ENCODE measurements at regions of chr17 and their contacts with region 1.

Region 1: GRCh38 chr17:59892924-59893676 is at the starts of genes RPS6KB1 and TUBD1:
- DNase-seq: peak; percentile 99
- H3K4me3 Mint-ChIP-seq: peak within 1 kb of the TSS; percentile 100
- H3K27ac Mint-ChIP-seq: peak within 1 kb of the TSS; percentile 96
- H3K4me1 Mint-ChIP-seq: peaks cover 58% of the 10 kb centered on the region
- H3K27me3 Mint-ChIP-seq: no peaks in the 10 kb centered on the region
- total RNA-seq, gene RPS6KB1: 42.1 to 48.5 TPM
- total RNA-seq, gene TUBD1: 15.2 to 15.4 TPM

Region 2: GRCh38 chr17:59707114-59707970 is 185.8 kb before region 1 on chr17 and contains the starts of genes PTRH2 and VMP1:
- CTCF ChIA-PET with region 1: no interaction called
- intact Hi-C with region 1: loop called (anchors 1 kb)
- DNase-seq: peak; percentile 97
- H3K4me3 Mint-ChIP-seq: peak within 1 kb of the TSS; percentile 94
- H3K27ac Mint-ChIP-seq: peak within 1 kb of the TSS; percentile 92
- H3K4me1 Mint-ChIP-seq: peaks cover 54% of the 10 kb centered on the region
- H3K27me3 Mint-ChIP-seq: no peaks in the 10 kb centered on the region
- total RNA-seq, gene PTRH2: 19.7 to 24.4 TPM
- total RNA-seq, gene VMP1: 423 to 438 TPM

Region 3: GRCh38 chr17:59846394-59847165 is 46.5 kb before region 1 on chr17:
- CTCF ChIA-PET with region 1: interaction called, 3 read pairs
- intact Hi-C with region 1: loop called (anchors 2 kb)
- DNase-seq: peak; percentile 53
- H3K4me3 Mint-ChIP-seq: peak overlapping the region; percentile 28
- H3K27ac Mint-ChIP-seq: peak overlapping the region; percentile 100
- H3K4me1 Mint-ChIP-seq: peaks cover 76% of the 10 kb centered on the region
- H3K27me3 Mint-ChIP-seq: no peaks in the 10 kb centered on the region

Region 4: GRCh38 chr17:59941131-59941530 is 48.0 kb after region 1 on chr17:
- CTCF ChIA-PET with region 1: no interaction called
- intact Hi-C with region 1: loop called (anchors 1 kb)
- DNase-seq: peak; percentile 38
- H3K4me3 Mint-ChIP-seq: peak overlapping the region; percentile 39
- H3K27ac Mint-ChIP-seq: peak overlapping the region; percentile 98
- H3K4me1 Mint-ChIP-seq: peaks cover 59% of the 10 kb centered on the region
- H3K27me3 Mint-ChIP-seq: no peaks in the 10 kb centered on the region

Region 5: DNA sequence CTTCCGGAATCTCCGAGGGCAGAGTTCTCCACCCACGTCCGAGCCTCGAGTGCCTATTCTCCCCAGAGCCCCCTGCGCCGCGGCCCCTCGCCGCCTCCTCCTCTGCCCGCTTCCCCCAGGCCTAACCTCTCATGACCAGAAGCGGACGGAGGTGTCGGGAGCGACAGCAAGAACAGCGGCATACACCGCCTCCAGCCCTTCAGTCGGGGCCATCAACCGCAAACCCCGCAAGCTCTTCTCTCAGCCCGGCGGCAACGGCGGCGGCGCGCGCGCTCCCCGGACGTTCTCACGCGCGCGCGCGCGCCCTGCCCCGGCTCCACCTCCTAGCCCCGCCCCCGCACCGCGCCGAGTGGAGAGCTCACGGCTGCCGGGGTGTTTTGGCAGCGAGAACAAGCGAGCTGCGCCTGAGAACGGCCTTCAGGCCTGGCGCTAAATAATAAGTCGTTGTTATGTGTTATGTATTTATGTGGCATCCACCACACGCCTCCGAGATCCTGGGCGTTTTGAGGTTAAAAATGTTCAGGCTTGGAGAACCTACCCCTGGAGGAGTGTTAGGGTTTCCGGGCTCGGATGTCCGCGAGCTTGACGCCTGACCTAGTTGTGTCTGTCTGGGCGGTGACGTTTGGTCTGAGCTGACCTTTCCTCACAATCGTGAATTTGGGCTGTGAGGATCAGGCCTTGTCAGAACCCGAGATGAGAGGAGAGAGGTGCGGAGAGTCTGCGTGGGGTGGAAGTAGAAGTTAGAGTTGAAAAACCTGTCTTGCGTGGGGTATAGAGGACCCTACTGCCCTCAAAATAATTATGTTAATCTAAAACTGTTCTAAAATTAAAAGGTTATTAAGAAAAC is 71.6 kb after region 1 on chr17 and contains the start of gene RNFT1:
- CTCF ChIA-PET with region 1: interaction called, 3 read pairs
- intact Hi-C with region 1: loop called (anchors 1 kb)
- DNase-seq: peak; percentile 94
- H3K4me3 Mint-ChIP-seq: peak within 1 kb of the TSS; percentile 91
- H3K27ac Mint-ChIP-seq: peak within 1 kb of the TSS; percentile 95
- H3K4me1 Mint-ChIP-seq: peaks cover 22% of the 10 kb centered on the region
- H3K27me3 Mint-ChIP-seq: no peaks in the 10 kb centered on the region
- total RNA-seq, gene RNFT1: 29.1 to 31.1 TPM

Region 6: GRCh38 chr17:60102632-60103096 is 209.6 kb after region 1 on chr17:
- CTCF ChIA-PET with region 1: no interaction called
- intact Hi-C with region 1: loop called (anchors 10 kb)
- DNase-seq: peak; percentile 62
- H3K4me3 Mint-ChIP-seq: peak overlapping the region; percentile 75
- H3K27ac Mint-ChIP-seq: no peak overlapping the region
- H3K4me1 Mint-ChIP-seq: peaks cover 11% of the 10 kb centered on the region
- H3K27me3 Mint-ChIP-seq: peaks cover 14% of the 10 kb centered on the region

Region 7: GRCh38 chr17:60599620-60600489 is 706.8 kb after region 1 on chr17 and contains the start of gene PPM1D:
- CTCF ChIA-PET with region 1: no interaction called
- intact Hi-C with region 1: loop called (anchors 5 kb)
- DNase-seq: peak; percentile 99
- H3K4me3 Mint-ChIP-seq: peak within 1 kb of the TSS; percentile 93
- H3K27ac Mint-ChIP-seq: peak within 1 kb of the TSS; percentile 95
- H3K4me1 Mint-ChIP-seq: peaks cover 30% of the 10 kb centered on the region
- H3K27me3 Mint-ChIP-seq: no peaks in the 10 kb centered on the region
- total RNA-seq, gene PPM1D: 11.8 to 13.1 TPM